Activated T-helper 1 cell treated with anti-CD3 and anti-CD28 coated beads, Interleukin-12 subunit alpha, Interleukin-12 subunit beta, Interleukin-2, Interleukin-4 antibody, amounts not matched to agents 30 ng/mL and 10 ng/mL and 1 ng/mL, durations not matched to agents 14 hours and 24 hours and 36 hours (primary cell): ENCODE measurements at regions of chr14 and their contacts with region 1.

Region 1: DNA sequence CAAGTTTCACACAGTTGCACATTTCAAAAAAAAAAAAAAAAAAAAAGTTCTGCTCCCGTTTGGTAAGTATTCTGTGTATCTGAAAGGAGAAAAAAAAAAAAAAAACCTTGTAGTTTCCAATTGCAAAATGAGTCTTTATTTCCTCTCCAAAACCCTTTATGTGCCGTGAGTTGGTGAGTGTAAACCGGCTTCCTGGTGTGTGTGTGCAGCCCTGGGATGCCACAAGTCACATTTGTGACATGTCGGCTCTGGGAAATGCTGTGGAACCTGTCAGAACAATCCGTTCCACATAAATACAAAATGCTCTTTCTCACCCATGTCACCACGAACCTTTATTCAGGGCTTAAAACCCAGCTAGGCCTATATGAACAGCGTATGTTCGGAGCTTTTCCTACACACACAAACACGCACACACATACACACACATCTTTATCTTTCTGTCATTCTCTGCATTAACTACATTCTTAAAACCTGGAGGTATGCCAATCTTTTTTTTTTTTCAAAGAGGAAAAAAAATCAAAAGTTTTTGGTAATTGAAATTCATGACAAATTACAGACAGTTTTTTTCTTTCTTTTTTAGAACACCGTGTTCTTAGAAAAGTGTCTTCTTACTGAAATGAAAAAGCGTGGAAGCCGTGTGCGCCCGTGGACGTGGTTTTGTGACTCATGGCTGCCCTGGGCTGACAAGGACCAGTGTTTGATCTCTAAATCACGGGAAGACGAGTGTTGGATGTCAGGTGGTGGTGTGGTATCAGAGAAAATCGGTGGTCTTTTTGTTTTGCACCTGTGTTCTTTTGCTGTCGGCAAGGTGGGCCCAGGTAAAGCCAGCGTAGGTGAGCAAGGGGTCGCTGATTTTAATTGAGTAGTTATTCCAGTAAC is 612.0 kb downstream of the VRK1 start:
- DNase-seq: peak; percentile 24
- H3K4me3 Mint-ChIP-seq: peak overlapping the region; percentile 68
- H3K27ac Mint-ChIP-seq: peak overlapping the region; percentile 88
- H3K4me1 Mint-ChIP-seq: peaks cover 32% of the 10 kb centered on the region
- H3K27me3 Mint-ChIP-seq: peaks cover 4% of the 10 kb centered on the region

Region 2: GRCh38 chr14:97306760-97307246 is 102.4 kb before region 1 on chr14:
- intact Hi-C with region 1: loop called (anchors 1 kb)
- DNase-seq: no peak
- H3K4me3 Mint-ChIP-seq: peak overlapping the region; percentile 9
- H3K27ac Mint-ChIP-seq: peak overlapping the region; percentile 81
- H3K4me1 Mint-ChIP-seq: peaks cover 28% of the 10 kb centered on the region
- H3K27me3 Mint-ChIP-seq: no peaks in the 10 kb centered on the region

Region 3: DNA sequence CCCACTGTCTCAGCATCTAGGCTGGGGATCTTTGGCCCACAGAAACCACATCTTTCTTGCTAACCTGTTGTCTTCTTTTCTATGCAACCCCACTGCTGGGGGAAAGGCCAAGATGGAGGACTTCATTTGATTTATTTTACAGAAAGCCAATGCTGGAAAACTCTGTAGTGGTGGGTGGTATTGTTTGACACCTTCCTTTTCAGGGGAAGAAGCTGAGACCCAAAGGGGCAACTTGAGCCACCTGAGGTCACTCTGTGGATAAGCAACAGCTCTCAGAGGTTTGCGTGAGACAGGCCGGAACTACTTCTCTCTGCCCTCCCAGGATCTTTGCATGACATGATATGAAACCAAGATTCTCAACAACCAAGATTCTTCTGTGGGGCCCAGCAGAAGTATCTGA is 33.2 kb after region 1 on chr14:
- intact Hi-C with region 1: loop called (anchors 1 kb)
- DNase-seq: peak; percentile 26
- H3K4me3 Mint-ChIP-seq: peak overlapping the region; percentile 61
- H3K27ac Mint-ChIP-seq: peak overlapping the region; percentile 90
- H3K4me1 Mint-ChIP-seq: peaks cover 36% of the 10 kb centered on the region
- H3K27me3 Mint-ChIP-seq: no peaks in the 10 kb centered on the region

Region 4: GRCh38 chr14:97620066-97620465 is 210.9 kb after region 1 on chr14:
- intact Hi-C with region 1: loop called (anchors 5 kb)
- DNase-seq: no peak
- H3K4me3 Mint-ChIP-seq: peak overlapping the region; percentile 79
- H3K27ac Mint-ChIP-seq: peak overlapping the region; percentile 56
- H3K4me1 Mint-ChIP-seq: peaks cover 47% of the 10 kb centered on the region
- H3K27me3 Mint-ChIP-seq: peaks cover 4% of the 10 kb centered on the region

Region 5: GRCh38 chr14:97707603-97708002 is 298.4 kb after region 1 on chr14:
- intact Hi-C with region 1: loop called (anchors 5 kb)
- DNase-seq: no peak
- H3K4me3 Mint-ChIP-seq: peak overlapping the region; percentile 9
- H3K27ac Mint-ChIP-seq: no peak overlapping the region
- H3K4me1 Mint-ChIP-seq: peaks cover 79% of the 10 kb centered on the region
- H3K27me3 Mint-ChIP-seq: no peaks in the 10 kb centered on the region

Region 6: DNA sequence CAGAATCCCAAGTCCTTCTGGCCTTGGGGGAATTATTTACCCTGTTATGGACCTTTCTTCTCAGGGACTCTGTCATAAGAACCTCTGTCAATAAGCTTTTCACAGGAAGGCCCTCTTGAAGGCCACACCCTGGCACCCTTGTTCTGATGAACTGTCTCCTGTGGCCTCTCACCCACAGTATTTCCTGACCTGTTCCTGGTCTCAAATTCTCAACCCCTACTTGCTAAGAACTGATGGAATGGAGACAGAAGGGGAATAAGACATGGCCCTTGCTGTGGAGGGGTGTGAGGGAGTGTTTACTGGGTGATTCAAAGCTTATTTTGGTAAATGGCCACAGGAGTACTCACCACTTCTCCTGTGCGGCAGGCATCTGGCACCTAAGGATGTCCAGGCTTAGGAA is 779.9 kb after region 1 on chr14:
- intact Hi-C with region 1: loop called (anchors 5 kb)
- DNase-seq: peak; percentile 38
- H3K4me3 Mint-ChIP-seq: peak overlapping the region; percentile 75
- H3K27ac Mint-ChIP-seq: peak overlapping the region; percentile 97
- H3K4me1 Mint-ChIP-seq: peaks cover 100% of the 10 kb centered on the region
- H3K27me3 Mint-ChIP-seq: no peaks in the 10 kb centered on the region

Region 7: GRCh38 chr14:98608071-98609060 is 1199.2 kb after region 1 on chr14:
- intact Hi-C with region 1: no loop called
- DNase-seq: no peak
- H3K4me3 Mint-ChIP-seq: no peak overlapping the region
- H3K27ac Mint-ChIP-seq: no peak overlapping the region
- H3K4me1 Mint-ChIP-seq: peaks cover 13% of the 10 kb centered on the region
- H3K27me3 Mint-ChIP-seq: no peaks in the 10 kb centered on the region